OCI-LY7 (cell line): ENCODE measurements at regions of chr9 and their contacts with region 1.

Region 1: DNA sequence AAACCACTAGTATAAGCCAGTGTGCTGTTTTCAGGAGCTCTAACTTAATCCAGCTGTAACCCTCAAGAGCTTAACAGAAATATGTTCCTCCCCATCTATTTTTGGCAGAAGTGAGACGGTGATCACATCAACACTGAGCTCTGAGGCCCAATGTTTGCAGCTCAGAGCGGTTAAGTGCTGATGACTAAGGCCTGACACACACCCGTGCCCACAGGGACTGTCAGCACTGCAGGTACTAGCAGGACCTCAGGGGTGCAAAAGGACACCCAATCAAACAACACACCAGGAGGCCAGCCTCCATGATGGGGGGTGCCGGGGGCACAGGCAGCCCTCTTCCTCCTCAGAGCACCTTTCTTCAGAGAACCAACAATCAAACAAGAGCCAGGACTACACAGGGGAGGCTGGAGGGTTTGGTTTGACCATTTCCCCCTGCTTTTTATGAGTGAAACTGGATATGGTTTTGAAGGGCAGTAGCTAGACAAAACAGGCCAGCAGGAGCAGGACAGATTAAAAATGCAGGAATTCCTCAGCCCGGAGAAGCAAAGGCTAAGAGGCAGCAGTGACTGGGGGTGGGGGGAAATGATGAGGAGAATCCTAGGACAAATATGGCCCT is 61.3 kb downstream of the RAPGEF1 start:
- DNase-seq: peak; percentile 90
- H3K4me3 ChIP-seq: peak overlapping the region; percentile 76
- H3K27ac ChIP-seq: peak overlapping the region; percentile 98
- H3K4me1 ChIP-seq: peaks cover 53% of the 10 kb centered on the region
- CTCF ChIP-seq: no peak

Region 2: DNA sequence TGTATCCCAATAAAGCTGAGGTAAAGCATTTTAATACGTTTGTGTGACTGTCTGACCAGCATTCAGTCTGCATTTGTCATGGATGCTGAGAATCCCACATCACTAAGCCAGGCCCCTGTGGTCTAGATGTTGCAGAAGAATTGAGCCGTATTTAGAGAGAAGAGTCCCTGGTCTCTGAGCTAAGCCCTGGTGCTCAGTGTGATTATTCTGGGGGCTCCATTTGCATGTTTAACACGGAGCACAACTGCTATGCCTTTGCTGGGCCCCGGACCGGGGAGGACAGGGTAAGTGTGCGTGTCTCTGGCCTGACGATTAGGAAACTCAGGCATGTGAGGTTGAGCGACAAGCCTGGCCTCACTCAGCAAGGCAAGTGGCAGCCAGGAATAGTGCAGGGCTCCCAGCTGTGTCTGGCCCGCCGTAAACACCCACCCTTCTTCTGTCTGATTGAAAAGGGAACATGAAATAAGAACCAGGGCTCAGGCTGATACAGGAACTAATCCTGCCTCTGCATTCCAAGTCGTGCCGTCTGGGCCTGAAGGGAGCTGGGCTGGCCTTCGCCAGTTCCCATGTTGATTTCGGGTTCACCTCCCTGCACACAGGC is 424.6 kb before region 1 on chr9:
- CTCF ChIA-PET with region 1: no interaction called
- POLR2A ChIA-PET with region 1: interaction called, 4 read pairs
- intact Hi-C with region 1: loop called (anchors 5 kb)
- DNase-seq: peak; percentile 82
- H3K4me3 ChIP-seq: peak overlapping the region; percentile 41
- H3K27ac ChIP-seq: peak overlapping the region; percentile 94
- H3K4me1 ChIP-seq: peaks cover 64% of the 10 kb centered on the region
- CTCF ChIP-seq: no peak

Region 3: GRCh38 chr9:131393622-131394463 is 284.8 kb before region 1 on chr9 and contains the start of gene PRRC2B:
- CTCF ChIA-PET with region 1: no interaction called
- POLR2A ChIA-PET with region 1: no interaction called
- intact Hi-C with region 1: loop called (anchors 10 kb)
- DNase-seq: peak; percentile 87
- H3K4me3 ChIP-seq: peak within 1 kb of the TSS; percentile 85
- H3K27ac ChIP-seq: peak within 1 kb of the TSS; percentile 89
- H3K4me1 ChIP-seq: peaks cover 45% of the 10 kb centered on the region
- CTCF ChIP-seq: peak; percentile 12; the same call in 1 of the 2 replicates
- total RNA-seq, gene PRRC2B: 84.2 and 89.4 TPM in 2 replicates

Region 4: GRCh38 chr9:131661568-131662288 is 16.9 kb before region 1 on chr9:
- CTCF ChIA-PET with region 1: interaction called, 3 read pairs
- POLR2A ChIA-PET with region 1: interaction called, 62 read pairs
- intact Hi-C with region 1: no loop called
- DNase-seq: peak; percentile 65
- H3K4me3 ChIP-seq: peak overlapping the region; percentile 14
- H3K27ac ChIP-seq: peak overlapping the region; percentile 53
- H3K4me1 ChIP-seq: peaks cover 99% of the 10 kb centered on the region
- CTCF ChIP-seq: no peak

Region 5: DNA sequence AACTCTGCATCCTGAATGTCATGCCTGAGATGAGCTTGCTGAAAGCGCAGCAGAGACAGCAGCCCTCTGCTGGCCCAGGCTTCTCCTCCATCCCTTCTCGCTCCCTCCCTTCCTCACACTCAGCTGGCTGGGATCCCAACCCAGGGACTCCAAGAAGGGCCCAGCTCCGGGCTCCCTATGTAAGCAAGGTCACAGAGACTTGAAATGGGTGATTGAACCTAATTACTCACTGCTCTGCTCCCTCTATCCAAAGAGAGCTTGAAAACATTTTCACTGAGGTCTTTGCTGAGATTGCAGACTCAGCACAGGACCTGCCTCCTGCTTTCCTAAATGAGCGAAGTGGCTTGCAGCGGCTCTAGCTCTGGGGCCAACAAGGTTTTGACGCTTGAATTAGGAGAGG is 18.5 kb after region 1 on chr9:
- CTCF ChIA-PET with region 1: interaction called, 3 read pairs
- POLR2A ChIA-PET with region 1: interaction called, 33 read pairs
- intact Hi-C with region 1: no loop called
- DNase-seq: no peak
- H3K4me3 ChIP-seq: no peak overlapping the region
- H3K27ac ChIP-seq: no peak overlapping the region
- H3K4me1 ChIP-seq: peaks cover 74% of the 10 kb centered on the region
- CTCF ChIP-seq: no peak

Region 6: GRCh38 chr9:131733541-131734061 is 55.0 kb after region 1 on chr9:
- CTCF ChIA-PET with region 1: interaction called, 11 read pairs
- POLR2A ChIA-PET with region 1: interaction called, 347 read pairs
- intact Hi-C with region 1: loop called (anchors 1 kb)
- DNase-seq: no peak
- H3K4me3 ChIP-seq: peak overlapping the region; percentile 81
- H3K27ac ChIP-seq: peak overlapping the region; percentile 100
- H3K4me1 ChIP-seq: peaks cover 88% of the 10 kb centered on the region
- CTCF ChIP-seq: no peak

Region 7: GRCh38 chr9:131747356-131747755 is 68.8 kb after region 1 on chr9:
- CTCF ChIA-PET with region 1: interaction called, 4 read pairs
- POLR2A ChIA-PET with region 1: interaction called, 15 read pairs
- intact Hi-C with region 1: no loop called
- DNase-seq: peak; percentile 82
- H3K4me3 ChIP-seq: no peak overlapping the region
- H3K27ac ChIP-seq: peak overlapping the region; percentile 96
- H3K4me1 ChIP-seq: peaks cover 96% of the 10 kb centered on the region
- CTCF ChIP-seq: peak; percentile 84

Region 8: DNA sequence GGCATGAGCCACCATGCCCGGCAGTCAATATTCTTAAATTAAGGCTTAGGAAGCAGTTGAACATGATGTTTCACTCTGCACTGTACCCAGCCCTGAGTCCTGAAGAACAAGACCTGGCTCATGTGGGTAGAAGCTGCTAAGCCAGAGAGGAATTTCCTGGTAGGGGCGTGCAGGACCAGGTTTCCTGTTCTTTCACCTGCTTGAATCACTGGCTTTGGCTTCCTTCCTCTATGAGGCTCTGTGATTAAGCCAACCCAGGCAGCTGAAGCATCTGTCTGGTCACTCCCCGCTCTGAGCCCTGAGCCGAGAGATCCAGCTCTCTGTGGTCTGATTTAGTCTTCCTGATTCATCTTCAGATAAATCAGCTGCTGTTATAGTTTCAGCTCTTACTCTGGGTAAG is 760.5 kb after region 1 on chr9:
- CTCF ChIA-PET with region 1: no interaction called
- POLR2A ChIA-PET with region 1: no interaction called
- intact Hi-C with region 1: no loop called
- DNase-seq: no peak
- H3K4me3 ChIP-seq: no peak overlapping the region
- H3K27ac ChIP-seq: no peak overlapping the region
- H3K4me1 ChIP-seq: no peaks in the 10 kb centered on the region
- CTCF ChIP-seq: no peak